Ascending aorta (tissue), 2 donors: ENCODE measurements at regions of chr11 and their contacts with region 1.

Region 1: DNA sequence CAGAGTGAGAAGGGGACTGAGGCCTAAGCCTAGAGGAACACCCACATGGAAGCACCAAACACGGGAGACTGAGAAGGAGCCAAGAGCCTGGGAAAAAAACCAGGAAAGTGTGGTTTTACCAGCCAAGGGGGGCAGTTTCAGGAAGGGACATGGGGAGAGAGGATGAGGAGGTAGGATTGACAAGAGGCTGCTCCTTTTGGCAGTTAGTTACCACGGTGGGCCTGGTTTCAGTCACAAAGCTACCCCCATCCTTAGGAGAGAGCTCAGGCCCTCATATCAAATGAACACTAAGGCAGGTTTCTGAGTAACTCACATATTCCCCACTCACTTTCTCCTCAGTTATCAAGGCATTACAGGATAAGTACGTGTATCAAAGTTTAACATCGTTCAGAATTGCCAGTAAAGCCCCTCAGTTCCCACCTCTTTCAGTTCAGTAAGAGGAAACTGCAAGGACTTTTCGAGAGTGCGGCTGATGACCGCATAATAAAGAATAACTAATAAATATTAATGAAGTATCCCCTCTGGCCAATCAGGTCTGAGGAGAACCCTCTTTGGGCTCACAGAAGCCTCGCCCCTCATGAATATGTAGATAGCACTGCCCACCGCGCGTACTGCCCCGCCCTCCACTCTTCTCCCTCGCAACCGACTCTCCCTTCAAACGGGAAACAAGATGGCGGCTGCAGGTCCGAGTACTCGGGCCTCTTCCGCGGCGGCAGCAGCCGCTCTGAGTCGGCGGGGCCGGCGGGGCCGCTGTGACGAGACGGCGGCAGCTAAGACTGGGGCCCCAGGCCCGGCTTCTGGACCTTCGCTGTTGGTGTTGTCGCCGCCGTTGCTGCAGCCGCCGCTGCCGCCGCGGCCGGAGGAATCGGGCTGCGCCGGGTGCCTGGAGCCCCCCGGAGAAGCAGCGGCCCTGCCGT is at the start of gene RNF169:
- DNase-seq: peak; percentile 90 to 98
- H3K4me3 ChIP-seq: peak within 1 kb of the TSS; percentile 72 to 97
- H3K27ac ChIP-seq: peak within 1 kb of the TSS; percentile 89 to 91
- H3K4me1 ChIP-seq: peaks cover 0 to 16% of the 10 kb centered on the region in 2 donors
- H3K27me3 ChIP-seq: no peaks in the 10 kb centered on the region
- CTCF ChIP-seq: no peak
- total RNA-seq, gene RNF169: 19.5 TPM

Region 2: GRCh38 chr11:74702383-74703007 is 46.0 kb before region 1 on chr11:
- intact Hi-C with region 1: no loop called
- DNase-seq: peak in 1 of 2 donors; percentile 79
- H3K4me3 ChIP-seq: no peak overlapping the region
- H3K27ac ChIP-seq: no peak overlapping the region
- H3K4me1 ChIP-seq: no peaks in the 10 kb centered on the region
- H3K27me3 ChIP-seq: no peaks in the 10 kb centered on the region
- CTCF ChIP-seq: peak; percentile 67 to 95 (median 88)

Region 3: GRCh38 chr11:74820763-74821162 is 72.3 kb after region 1 on chr11:
- intact Hi-C with region 1: loop called (anchors 5 kb)
- DNase-seq: no peak
- H3K4me3 ChIP-seq: no peak overlapping the region
- H3K27ac ChIP-seq: peak overlapping the region; percentile 56 to 67
- H3K4me1 ChIP-seq: peaks cover 0 to 19% of the 10 kb centered on the region in 2 donors
- H3K27me3 ChIP-seq: no peaks in the 10 kb centered on the region
- CTCF ChIP-seq: no peak